ENCODE measurements at regions of chr15 and their contacts with region 1.

Region 1: DNA sequence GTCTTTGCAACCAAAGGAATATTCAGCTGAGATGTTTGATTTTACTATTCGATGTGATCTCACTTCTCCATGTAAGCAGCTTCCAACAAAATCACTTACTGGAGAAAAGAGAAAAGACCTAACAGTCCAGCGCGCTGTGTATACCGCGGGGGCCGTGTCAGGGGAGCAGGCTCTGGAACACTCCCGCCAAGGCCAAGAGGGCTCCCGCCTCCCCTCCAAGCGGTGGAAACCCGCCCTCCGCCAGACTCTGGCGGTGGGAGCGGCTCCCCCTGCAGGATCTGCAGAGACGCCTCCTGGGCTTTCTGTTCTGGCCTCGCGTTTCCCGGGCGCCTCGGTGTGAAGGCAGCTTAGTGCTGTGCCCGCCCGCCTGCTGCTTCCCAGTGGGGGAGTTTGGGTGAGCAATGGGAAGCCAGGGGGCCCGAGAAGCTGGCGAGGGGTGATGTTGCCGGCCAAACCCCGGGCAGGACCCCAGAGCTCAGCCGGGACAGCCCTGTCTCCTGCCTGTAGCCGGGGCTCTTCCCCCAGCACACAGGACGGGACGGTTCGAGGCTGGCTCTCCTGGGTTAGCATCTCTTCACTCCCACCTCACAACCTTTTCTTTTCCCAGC is 36.3 kb downstream of the CHST14 start:
- DNase-seq: no peak
- ATAC-seq: peak; percentile 97
- H3K4me3 ChIP-seq: peak overlapping the region; percentile 7 to 22
- H3K27ac ChIP-seq: peak overlapping the region; percentile 71
- H3K4me1 ChIP-seq: peaks cover 19% of the 10 kb centered on the region
- H3K27me3 ChIP-seq: no peaks in the 10 kb centered on the region
- CTCF ChIP-seq: peak; percentile 93

Region 2: GRCh38 chr15:40440743-40441564 is 66.1 kb before region 1 on chr15 and contains the start of gene BAHD1:
- CTCF ChIA-PET with region 1: interaction called, 4 read pairs
- POLR2A ChIA-PET with region 1: interaction called, 3 read pairs
- in situ Hi-C with region 1: no loop called
- intact Hi-C with region 1: loop called (anchors 5 kb)
- DNase-seq: peak; percentile 54
- ATAC-seq: peak; percentile 86
- H3K4me3 ChIP-seq: peak within 1 kb of the TSS; percentile 65 to 80
- H3K27ac ChIP-seq: peak within 1 kb of the TSS; percentile 91
- H3K4me1 ChIP-seq: peaks cover 66% of the 10 kb centered on the region
- H3K27me3 ChIP-seq: no peaks in the 10 kb centered on the region
- CTCF ChIP-seq: peak; percentile 52; the same call in 1 of the 2 replicates
- total RNA-seq, gene BAHD1: 40.6 TPM

Region 3: GRCh38 chr15:40582726-40583246 is 75.7 kb after region 1 on chr15:
- CTCF ChIA-PET with region 1: no interaction called
- POLR2A ChIA-PET with region 1: interaction called, 13 read pairs
- in situ Hi-C with region 1: no loop called
- intact Hi-C with region 1: no loop called
- DNase-seq: no peak
- ATAC-seq: peak; percentile 86
- H3K4me3 ChIP-seq: peak overlapping the region; percentile 52 to 83
- H3K27ac ChIP-seq: peak overlapping the region; percentile 89
- H3K4me1 ChIP-seq: 0 out of 2 replicates have a peak, but pooled peaks cover 4% of the 10 kb centered on the region
- H3K27me3 ChIP-seq: no peaks in the 10 kb centered on the region
- CTCF ChIP-seq: no peak

Region 4: DNA sequence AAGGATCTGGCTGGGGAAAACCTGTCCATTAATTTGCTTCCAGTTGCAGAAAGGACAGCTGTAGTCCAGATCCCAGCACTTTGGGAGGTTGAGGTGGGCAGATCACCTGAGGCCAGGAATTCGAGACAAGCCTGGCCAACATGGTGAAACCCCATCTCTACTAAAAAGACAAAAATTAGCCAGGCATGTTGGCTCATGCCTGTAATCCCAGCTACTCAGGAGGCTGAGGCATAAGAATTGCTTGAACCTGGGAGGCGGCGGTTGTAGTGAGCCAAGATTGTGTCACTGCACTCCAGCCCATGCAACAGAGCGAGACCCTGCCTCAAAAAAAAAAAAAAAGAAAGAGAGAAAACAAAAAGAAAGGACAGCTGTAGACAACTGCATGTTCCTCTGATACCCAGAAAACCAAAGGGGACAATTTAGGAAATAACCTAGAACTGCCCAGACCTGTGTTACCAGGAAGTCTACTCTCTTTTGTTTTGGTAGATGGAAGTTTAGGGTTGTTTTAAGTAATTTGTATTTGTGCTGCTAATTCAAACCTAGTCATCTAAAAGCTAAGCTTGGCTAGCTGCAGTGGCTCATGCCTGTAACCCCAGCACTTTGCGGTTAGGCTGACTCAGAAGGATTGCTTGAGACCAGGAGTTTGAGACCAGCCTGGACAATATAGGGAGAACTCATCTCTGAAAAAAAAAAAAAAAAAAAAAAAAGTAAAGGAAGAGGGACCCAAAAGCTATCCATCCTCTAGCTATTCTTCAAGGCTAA is 700.8 kb after region 1 on chr15:
- CTCF ChIA-PET with region 1: no interaction called
- POLR2A ChIA-PET with region 1: no interaction called
- in situ Hi-C with region 1: no loop called
- intact Hi-C with region 1: no loop called
- DNase-seq: no peak
- ATAC-seq: no peak
- H3K4me3 ChIP-seq: no peak overlapping the region
- H3K27ac ChIP-seq: no peak overlapping the region
- H3K4me1 ChIP-seq: no peaks in the 10 kb centered on the region
- H3K27me3 ChIP-seq: no peaks in the 10 kb centered on the region
- CTCF ChIP-seq: no peak

Measured in Panc1 (cell line).